SK-N-SH (cell line): ENCODE measurements at regions of chr17 and their contacts with region 1.

Region 1: GRCh38 chr17:48878918-48879898 is 13.4 kb upstream of the ATP5MC1 start:
- DNase-seq: peak; percentile 87
- H3K4me3 ChIP-seq: no peak overlapping the region
- H3K27ac ChIP-seq: no peak overlapping the region
- H3K4me1 ChIP-seq: no peaks in the 10 kb centered on the region
- H3K27me3 ChIP-seq: peaks cover 26% of the 10 kb centered on the region; the same call in 1 of the 2 replicates
- CTCF ChIP-seq: peak; percentile 100
- EP300 ChIP-seq: no peak
- RAD21 ChIP-seq: peak; percentile 100

Region 2: GRCh38 chr17:48678141-48678971 is 200.9 kb before region 1 on chr17:
- CTCF ChIA-PET with region 1: interaction called, 117 read pairs
- POLR2A ChIA-PET with region 1: no interaction called
- DNase-seq: peak; percentile 87
- H3K4me3 ChIP-seq: peak overlapping the region in 1 of 2 experiments; percentile 29; a peak in 1 of 4 replicates
- H3K27ac ChIP-seq: no peak overlapping the region
- H3K4me1 ChIP-seq: no peaks in the 10 kb centered on the region
- H3K27me3 ChIP-seq: peaks cover 96% of the 10 kb centered on the region
- CTCF ChIP-seq: peak; percentile 98
- EP300 ChIP-seq: no peak
- RAD21 ChIP-seq: peak; percentile 70

Region 3: DNA sequence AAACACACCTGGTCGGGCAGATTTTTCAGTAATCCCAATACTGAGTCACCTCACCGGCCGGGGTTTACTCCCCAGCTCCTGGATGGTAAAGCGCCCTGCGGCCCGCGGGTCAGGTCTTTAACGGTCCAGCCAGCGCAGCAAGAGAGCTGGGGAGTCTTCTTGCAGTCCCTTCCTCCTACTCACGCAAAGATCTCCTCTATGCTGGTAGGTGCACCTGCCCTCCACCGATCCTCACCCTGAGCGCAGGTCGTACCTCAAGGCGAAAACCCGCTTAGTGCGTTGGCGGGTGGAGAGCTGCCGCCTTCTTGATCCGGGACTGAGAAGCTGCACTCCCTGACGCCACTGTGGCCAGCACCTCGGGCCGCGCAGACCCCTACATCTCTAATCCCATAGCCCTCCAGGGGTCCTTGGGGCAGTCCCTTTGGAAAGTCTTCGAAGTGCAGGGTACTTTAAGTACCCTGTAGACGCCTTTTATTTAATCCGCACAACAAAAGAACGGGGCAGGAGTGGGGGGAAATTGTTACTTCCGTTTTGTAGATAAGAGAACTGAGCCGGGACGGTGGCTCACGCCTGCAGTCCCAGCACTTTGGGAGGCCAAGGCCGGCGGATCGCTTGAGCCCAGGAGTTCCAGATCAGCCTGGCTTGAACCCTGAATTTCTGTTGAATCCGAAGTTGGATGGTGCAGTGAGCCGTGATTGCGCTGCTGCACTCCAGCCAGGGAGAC is 140.2 kb before region 1 on chr17:
- CTCF ChIA-PET with region 1: interaction called, 25 read pairs
- POLR2A ChIA-PET with region 1: no interaction called
- DNase-seq: no peak
- H3K4me3 ChIP-seq: no peak overlapping the region
- H3K27ac ChIP-seq: no peak overlapping the region
- H3K4me1 ChIP-seq: no peaks in the 10 kb centered on the region
- H3K27me3 ChIP-seq: peaks cover 98% of the 10 kb centered on the region
- CTCF ChIP-seq: no peak
- EP300 ChIP-seq: no peak
- RAD21 ChIP-seq: no peak

Region 4: DNA sequence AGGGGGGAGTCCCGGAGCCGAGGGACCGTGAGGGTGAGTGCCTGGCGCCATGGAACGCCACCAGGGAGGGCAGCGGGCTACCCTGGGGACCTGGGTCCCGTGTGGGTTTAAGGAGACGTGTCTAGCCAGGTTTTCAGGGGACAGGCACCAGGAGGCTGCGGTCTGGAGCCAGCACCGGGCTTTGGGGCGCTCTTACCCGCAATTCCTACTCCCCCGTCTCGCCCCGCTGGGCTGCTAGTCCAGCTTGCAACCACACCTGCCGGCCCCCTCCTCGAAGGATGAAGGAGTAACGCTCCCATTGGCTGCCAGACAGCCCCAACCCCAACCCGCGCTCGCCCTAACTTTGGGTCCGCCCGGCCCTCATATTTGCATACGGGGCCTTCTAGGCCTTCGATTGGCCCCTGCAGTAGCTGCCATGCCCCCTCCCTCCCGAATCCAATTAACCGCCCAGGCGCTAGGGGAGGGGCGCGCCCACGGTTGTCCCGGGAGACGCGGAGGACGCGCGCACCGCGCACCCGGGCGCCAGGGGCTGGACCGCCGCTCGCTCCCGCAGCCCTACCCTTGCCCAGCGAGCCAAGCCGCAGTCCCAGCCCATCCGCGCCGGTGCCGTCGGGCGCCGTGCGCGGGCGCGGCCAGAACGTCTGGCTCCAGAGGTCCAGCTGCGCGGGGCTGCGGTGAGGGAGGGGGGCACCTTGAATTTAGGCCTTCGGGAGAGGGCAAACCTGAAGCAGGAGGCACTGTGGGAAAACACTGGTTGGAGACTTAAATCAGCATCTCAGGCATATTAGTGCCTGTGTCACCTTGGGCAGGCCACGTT is 62.2 kb before region 1 on chr17 and contains the start of gene TTLL6:
- CTCF ChIA-PET with region 1: interaction called, 1,196 read pairs
- POLR2A ChIA-PET with region 1: interaction called, 5 read pairs
- DNase-seq: peak; percentile 97
- H3K4me3 ChIP-seq: peak within 1 kb of the TSS; percentile 45 to 62
- H3K27ac ChIP-seq: no peak within 1 kb of the TSS
- H3K4me1 ChIP-seq: peaks cover 0 to 9% of the 10 kb centered on the region in 2 experiments; a peak in 1 of 4 replicates
- H3K27me3 ChIP-seq: peaks cover 35% of the 10 kb centered on the region; the same call in 1 of the 2 replicates
- CTCF ChIP-seq: no peak
- EP300 ChIP-seq: no peak
- RAD21 ChIP-seq: no peak
- polyA plus RNA-seq, gene TTLL6: 3.1 and 5.1 TPM in 2 replicates

Region 5: DNA sequence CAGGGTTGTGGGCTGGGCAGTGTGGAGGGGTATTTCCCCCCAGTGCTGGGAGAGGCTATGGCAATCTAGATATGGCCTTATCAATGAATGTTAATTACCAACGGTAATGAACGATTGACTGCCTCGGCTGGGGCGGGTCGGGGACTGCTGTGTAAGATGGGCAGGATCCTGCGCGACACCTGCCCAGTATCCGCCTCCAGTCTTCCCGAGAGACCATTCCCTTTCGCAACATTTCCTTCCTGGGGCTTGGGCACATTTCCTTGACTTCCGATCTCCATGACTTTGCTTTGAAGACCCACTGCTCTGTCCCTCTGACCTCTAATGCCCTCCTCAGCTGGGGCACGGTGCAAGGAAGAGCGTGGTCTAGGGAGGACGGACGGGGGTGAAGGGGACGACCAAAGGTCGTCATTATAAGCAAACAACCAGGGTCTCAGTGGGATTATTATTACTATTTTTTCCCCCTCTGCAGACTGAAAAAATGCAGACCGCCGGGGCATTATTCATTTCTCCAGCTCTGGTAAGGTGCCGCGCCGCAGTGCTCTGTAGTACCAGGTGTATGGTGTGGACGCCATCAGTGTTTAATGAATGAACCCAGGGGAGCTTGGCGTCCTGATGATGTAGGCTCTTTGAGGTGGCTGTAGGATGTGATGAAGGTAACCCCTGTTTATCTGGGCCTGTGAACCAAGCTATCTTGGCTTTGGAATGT is 13.9 kb after region 1 on chr17:
- CTCF ChIA-PET with region 1: interaction called, 82 read pairs
- POLR2A ChIA-PET with region 1: interaction called, 6 read pairs
- DNase-seq: no peak
- H3K4me3 ChIP-seq: peak overlapping the region; percentile 54 to 77
- H3K27ac ChIP-seq: peak overlapping the region; percentile 0 to 3; a peak in 2 of 4 replicates
- H3K4me1 ChIP-seq: peaks cover 10 to 11% of the 10 kb centered on the region in 2 experiments; a peak in 3 of 4 replicates
- H3K27me3 ChIP-seq: no peaks in the 10 kb centered on the region
- CTCF ChIP-seq: no peak
- EP300 ChIP-seq: no peak
- RAD21 ChIP-seq: no peak

Region 6: DNA sequence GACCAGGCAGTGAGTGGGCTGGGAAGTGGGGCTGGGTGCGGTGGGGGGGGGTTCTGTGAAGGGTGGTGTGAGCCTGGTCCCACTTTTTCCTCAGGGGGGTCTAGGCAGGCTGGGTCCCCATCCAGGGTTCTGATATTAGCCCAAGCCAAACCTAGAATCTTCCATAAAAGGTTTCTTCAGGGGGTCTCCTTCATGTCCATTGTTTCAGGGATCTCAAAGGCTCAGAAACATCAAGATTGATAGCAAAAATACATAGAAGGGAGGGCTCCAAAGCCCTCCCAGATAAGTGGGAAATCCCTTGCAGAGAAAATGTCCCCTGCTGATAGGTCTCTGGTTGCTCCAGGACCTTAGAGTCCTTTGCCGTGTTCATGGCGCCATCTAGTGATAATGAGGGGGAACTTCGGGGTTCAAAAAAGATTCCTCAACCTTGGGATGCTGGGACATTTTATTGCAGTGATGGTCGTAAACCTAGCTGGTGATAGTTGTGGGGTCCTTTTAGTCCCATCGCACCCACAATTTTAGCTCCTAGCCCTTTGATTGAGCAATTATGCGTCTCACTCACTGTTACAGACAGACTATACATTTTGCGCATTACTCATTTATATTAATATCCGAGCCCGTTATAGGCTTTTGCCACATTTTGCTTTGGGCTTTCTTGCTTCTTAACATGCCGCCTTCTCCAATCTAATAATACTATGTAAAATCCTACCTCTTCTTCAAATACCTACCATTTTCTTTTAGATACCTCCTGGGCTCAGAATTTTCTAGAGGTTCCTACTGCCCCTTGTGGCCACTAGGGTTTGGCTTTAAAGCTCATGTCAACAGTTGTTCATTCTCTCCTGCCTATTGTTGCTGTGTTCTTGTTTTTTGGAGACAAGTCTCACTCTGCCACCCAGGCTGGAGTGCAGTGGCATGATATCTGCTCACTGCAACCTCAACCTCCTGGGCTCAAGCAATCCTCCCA is 153.0 kb after region 1 on chr17:
- CTCF ChIA-PET with region 1: interaction called, 27 read pairs
- POLR2A ChIA-PET with region 1: no interaction called
- DNase-seq: peak; percentile 88
- H3K4me3 ChIP-seq: peak overlapping the region in 1 of 2 experiments; percentile 28; a peak in 1 of 4 replicates
- H3K27ac ChIP-seq: no peak overlapping the region
- H3K4me1 ChIP-seq: peaks cover 0 to 6% of the 10 kb centered on the region in 2 experiments; a peak in 1 of 4 replicates
- H3K27me3 ChIP-seq: peaks cover 34% of the 10 kb centered on the region; the same call in 1 of the 2 replicates
- CTCF ChIP-seq: peak; percentile 95
- EP300 ChIP-seq: no peak
- RAD21 ChIP-seq: peak; percentile 98

Region 7: DNA sequence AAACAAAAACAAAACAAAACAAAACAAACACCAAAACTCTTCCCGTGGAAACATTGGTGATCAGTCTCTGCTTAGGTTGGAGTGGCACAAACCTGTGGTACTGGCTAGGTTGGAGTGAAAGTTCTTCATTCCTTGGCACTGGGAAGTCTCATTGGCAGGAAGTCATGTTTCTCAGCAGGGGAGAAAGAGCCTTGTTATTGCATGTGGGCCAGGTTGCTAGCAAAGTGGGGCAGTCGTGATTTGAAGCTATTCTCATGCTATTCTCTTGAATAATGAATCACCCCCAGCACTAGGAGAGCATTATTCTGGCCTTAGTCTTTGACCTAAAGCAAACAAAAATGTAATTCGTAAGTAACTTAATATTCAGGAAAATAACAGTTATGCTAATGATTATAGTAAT is 229.1 kb after region 1 on chr17:
- CTCF ChIA-PET with region 1: no interaction called
- POLR2A ChIA-PET with region 1: no interaction called
- DNase-seq: no peak
- H3K4me3 ChIP-seq: no peak overlapping the region
- H3K27ac ChIP-seq: peak overlapping the region in 1 of 2 experiments; percentile 71; a peak in 2 of 4 replicates
- H3K4me1 ChIP-seq: peaks cover 0 to 16% of the 10 kb centered on the region in 2 experiments; a peak in 2 of 4 replicates
- H3K27me3 ChIP-seq: peaks cover 13% of the 10 kb centered on the region; the same call in 1 of the 2 replicates
- CTCF ChIP-seq: no peak
- EP300 ChIP-seq: no peak
- RAD21 ChIP-seq: no peak